ENCODE measurements at regions of chr19 and their contacts with region 1.

Region 1: GRCh38 chr19:10580979-10581631 is 6.0 kb downstream of the AP1M2 start:
- DNase-seq: peak; percentile 95

Region 2: DNA sequence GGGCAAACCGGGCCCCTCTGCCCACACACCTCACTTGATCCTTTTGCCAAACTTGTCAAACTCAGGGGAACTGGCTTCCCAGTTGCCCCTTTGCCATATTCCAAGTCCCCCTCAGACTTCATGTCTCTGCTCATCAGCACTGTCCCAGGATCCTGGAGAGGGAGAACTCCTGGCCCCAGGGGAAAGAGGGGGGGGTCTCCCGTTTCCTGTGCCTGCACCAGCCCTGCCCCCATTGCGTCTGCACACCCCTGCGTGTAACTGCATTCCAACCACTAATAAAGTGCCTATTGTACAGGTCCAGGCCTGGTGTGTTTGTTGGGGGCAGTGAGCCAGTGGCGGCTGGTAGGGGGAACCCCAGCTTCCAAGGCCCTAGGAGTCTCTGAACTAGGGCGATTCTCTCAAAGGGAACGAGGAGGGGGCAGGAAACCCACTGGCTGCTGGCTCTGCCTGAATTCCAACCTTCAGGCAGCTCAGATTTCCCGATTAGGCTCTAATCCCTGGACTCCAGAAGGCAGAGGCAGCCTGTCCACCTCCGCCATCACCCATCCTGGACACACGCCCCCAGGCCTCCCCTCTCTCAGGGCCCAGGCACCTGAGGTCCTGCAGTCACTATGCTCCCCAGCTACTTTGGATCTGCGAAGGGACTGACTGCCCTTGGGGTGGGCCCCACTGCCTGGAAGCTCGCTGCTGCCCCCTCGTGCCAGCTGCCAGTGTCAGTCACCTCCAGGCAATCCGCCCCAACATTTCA is 63.3 kb after region 1 on chr19:
- intact Hi-C with region 1: loop called (anchors 2 kb)
- DNase-seq: peak; percentile 95

Region 3: DNA sequence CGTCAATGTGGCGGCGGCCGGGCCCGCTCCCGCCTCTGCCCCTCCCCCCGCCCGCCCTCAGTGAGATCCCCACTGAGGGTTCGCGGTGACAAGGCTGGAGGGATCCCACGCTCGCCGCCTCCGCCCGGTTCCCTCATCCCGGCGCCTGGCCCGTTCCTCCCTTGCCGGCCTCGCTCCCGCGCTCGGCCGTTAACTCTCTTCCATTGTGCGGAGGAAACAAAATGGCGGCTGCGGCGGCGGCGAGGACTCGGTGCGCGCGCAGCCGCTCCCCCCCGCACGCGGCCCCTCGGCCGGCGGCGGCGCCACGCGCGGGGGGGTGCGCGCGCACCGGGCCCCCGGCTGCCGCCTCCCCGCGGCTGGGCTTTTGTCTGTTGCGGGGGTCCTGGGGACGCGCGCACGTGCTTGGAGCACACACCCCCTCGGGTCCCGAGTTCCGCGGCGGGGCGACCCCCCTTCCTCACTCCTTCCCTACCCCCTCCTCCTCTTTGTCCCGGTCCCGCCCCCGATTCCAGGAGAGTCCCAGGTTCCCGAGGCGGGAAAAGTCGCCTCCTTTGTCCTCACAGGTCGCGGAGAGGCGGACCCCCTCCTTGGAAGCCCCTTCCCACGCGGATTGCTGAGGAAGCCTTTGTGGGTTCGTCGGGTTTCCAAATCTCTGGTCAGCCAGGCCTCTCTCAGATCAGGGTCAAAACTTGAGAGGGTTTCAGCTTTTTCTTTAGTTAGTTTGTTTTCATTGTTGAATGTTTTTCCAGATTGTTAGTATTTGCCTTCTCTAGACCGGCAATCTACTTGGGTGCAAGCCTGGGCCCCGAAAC is 73.6 kb after region 1 on chr19:
- intact Hi-C with region 1: no loop called
- DNase-seq: peak; percentile 84

Region 4: DNA sequence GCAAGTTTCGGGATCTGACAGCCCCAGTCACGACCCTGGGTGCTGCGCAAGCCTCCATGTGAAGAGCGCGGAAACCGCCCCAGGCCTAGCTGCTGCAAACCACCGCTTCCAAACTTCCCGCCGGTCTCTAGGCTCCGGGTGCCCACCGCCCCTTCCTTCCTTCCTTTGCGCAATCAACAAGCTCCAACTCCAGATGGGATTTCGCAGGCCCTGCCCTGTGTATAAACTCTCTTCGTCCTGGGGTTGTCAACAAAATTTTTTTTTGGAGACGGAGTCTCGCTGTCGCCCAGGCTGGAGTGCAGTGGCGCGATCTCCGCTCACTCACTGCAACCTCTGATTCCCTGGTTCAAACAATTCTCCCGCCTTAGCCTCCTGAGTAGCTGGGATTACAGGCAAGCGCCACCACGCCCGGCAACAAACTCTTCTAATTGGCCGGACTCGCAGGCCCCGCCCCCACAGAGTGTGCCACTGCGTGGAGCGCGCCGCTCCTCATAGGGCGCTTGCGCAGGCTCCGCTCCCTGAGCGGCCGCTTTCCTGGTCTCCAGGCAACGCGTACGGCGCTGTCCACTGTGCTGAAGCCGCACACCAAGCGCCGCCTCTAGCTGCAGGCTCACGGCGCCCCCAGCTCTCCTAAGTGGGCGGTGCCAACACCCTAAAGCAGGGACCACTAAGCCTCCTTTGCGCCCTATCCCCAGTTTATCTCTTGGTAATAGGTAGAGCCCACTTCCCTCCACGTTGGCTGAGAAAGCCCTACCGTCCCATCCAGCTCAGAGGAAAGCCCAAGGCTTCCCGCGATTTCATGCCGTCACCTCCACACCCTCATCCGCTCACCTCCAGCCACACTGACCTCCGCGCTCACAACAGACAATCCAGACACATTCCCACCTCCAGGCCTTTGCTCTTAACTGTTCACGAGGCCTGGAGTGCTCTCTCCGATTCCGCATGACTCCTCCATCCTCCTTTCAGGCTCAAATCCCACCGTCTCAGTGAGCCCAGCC is 114.6 kb after region 1 on chr19:
- intact Hi-C with region 1: loop called in 1 of 2 experiments (anchors 5 kb)
- DNase-seq: peak; percentile 98

Measured in posterior vena cava (tissue), 2 donors.